Transverse colon (tissue), 4 donors: ENCODE measurements at regions of chr11 and their contacts with region 1.

Region 1: GRCh38 chr11:56783448-56784041 is 35.0 kb upstream of the OR9G4 start:
- DNase-seq: no peak
- H3K4me3 ChIP-seq: peak overlapping the region in 1 of 4 donors; percentile 6
- H3K27ac ChIP-seq: no peak overlapping the region
- H3K4me1 ChIP-seq: peaks cover 0 to 5% (median 0%) of the 10 kb centered on the region in 4 donors
- H3K27me3 ChIP-seq: no peaks in the 10 kb centered on the region
- CTCF ChIP-seq: peak; percentile 54 to 64 (median 59)
- EP300 ChIP-seq: no peak
- POLR2A ChIP-seq: no peak

Region 2: DNA sequence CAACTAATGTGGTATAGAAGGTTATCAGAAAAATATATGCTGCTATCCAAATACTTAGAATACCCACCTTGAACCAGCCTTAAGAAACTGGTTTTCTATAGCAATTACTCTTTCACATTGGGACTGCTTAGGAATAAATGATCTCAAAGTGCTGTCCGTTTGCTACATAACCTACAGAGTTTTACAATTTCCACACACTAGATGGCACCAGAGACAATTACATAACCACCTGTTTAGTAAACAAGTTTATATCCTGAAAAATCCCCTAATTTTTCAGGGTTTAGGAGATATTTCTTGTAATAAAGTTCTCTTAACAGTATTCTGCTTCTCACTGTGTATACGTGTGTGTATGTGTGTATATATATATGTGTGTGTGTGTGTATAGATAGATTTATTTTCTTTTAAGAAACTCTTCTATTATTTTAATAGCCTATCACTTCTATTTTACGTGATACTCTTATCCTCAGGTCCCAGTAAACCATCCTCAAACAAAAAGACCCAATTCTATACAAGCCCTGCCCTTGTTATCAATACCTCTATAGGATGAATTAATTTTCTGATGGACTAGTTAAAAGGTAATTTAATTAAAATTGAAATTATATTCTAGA is 840.7 kb before region 1 on chr11:
- in situ Hi-C with region 1: loop called (anchors 10 to 25 kb)
- intact Hi-C with region 1: no loop called
- DNase-seq: no peak
- H3K4me3 ChIP-seq: no peak overlapping the region
- H3K27ac ChIP-seq: no peak overlapping the region
- H3K4me1 ChIP-seq: no peaks in the 10 kb centered on the region
- H3K27me3 ChIP-seq: no peaks in the 10 kb centered on the region
- CTCF ChIP-seq: peak in 4 of 5 experiments; percentile 23 to 39 (median 28)
- EP300 ChIP-seq: no peak
- POLR2A ChIP-seq: no peak

Region 3: DNA sequence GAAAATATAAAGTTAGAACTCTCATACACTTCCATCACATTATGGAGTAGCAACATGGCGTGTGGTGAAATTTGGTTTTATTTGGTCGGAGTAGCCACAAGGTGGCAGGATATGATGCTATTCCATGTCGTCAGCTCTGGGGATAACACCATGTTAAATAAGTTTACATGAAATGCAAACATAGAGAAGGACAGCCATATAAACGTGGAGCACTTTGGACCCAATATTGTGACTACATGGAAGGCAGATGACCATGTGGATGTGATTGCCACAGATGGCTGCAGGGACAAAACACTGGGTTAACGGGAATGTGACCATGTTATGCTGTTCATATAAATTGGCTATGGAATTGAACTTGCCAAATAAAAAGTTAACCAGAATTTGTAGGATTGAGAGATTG is 261.5 kb before region 1 on chr11:
- in situ Hi-C with region 1: loop called in 2 of 4 experiments (anchors 25 kb)
- intact Hi-C with region 1: no loop called
- DNase-seq: peak; percentile 19
- H3K4me3 ChIP-seq: no peak overlapping the region
- H3K27ac ChIP-seq: no peak overlapping the region
- H3K4me1 ChIP-seq: peaks cover 0 to 9% (median 0%) of the 10 kb centered on the region in 4 donors
- H3K27me3 ChIP-seq: no peaks in the 10 kb centered on the region
- CTCF ChIP-seq: peak in 4 of 5 experiments; percentile 32 to 60 (median 49)
- EP300 ChIP-seq: no peak
- POLR2A ChIP-seq: no peak

Region 4: GRCh38 chr11:56624661-56625110 is 158.9 kb before region 1 on chr11:
- in situ Hi-C with region 1: loop called in 1 of 4 experiments (anchors 25 kb)
- intact Hi-C with region 1: no loop called
- DNase-seq: no peak
- H3K4me3 ChIP-seq: no peak overlapping the region
- H3K27ac ChIP-seq: no peak overlapping the region
- H3K4me1 ChIP-seq: no peaks in the 10 kb centered on the region
- H3K27me3 ChIP-seq: no peaks in the 10 kb centered on the region
- CTCF ChIP-seq: peak; percentile 33 to 49 (median 44)
- EP300 ChIP-seq: no peak
- POLR2A ChIP-seq: no peak

Region 5: GRCh38 chr11:56917708-56918400 is 134.3 kb after region 1 on chr11:
- in situ Hi-C with region 1: no loop called
- intact Hi-C with region 1: no loop called
- DNase-seq: no peak
- H3K4me3 ChIP-seq: no peak overlapping the region
- H3K27ac ChIP-seq: peak overlapping the region in 1 of 4 donors; percentile 29
- H3K4me1 ChIP-seq: no peaks in the 10 kb centered on the region
- H3K27me3 ChIP-seq: no peaks in the 10 kb centered on the region
- CTCF ChIP-seq: no peak
- EP300 ChIP-seq: no peak
- POLR2A ChIP-seq: no peak